Psoas muscle (tissue), 8 donors: ENCODE measurements at regions of chr11 and their contacts with region 1.

Region 1: GRCh38 chr11:133443206-133443747 is 89.0 kb downstream of the OPCML start:
- DNase-seq: no peak
- ATAC-seq: no peak
- H3K4me3 ChIP-seq: no peak overlapping the region
- H3K27ac ChIP-seq: no peak overlapping the region
- H3K4me1 ChIP-seq: no peaks in the 10 kb centered on the region
- H3K27me3 ChIP-seq: no peaks in the 10 kb centered on the region
- CTCF ChIP-seq: no peak

Region 2: DNA sequence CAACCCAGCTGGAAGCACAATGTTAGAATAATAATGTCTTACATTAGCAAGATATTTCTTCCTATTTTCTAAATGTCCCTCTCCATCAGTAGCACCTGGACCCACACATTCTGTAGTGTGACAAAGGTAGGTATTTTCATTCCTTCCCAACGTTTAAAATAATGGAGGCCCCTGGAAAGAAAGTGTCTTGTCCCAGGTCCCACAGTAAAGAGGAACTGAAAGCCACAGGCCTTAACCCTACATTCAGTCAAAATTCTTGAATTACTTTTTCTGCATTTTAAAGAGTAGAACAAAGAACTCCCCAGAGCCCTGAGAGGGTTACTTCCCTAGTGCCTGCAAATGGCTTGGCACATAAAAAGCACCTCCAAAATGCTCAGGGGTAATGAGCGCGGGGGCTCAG is 62.7 kb after region 1 on chr11:
- intact Hi-C with region 1: loop called in 1 of 2 experiments (anchors 10 kb)
- DNase-seq: no peak
- ATAC-seq: no peak
- H3K4me3 ChIP-seq: no peak overlapping the region
- H3K27ac ChIP-seq: no peak overlapping the region
- H3K4me1 ChIP-seq: no peaks in the 10 kb centered on the region
- H3K27me3 ChIP-seq: peaks cover 0 to 2% (median 0%) of the 10 kb centered on the region in 3 donors
- CTCF ChIP-seq: no peak